CD4-positive, alpha-beta memory T cell (primary cell): ENCODE measurements at regions of chr9 and their contacts with region 1.

Region 1: GRCh38 chr9:131334629-131335367 is 45.3 kb downstream of the PLPP7 start:
- DNase-seq: no peak
- H3K4me3 ChIP-seq: no peak overlapping the region
- H3K4me3 Mint-ChIP-seq: no peak overlapping the region
- H3K27ac ChIP-seq: no peak overlapping the region
- H3K27ac Mint-ChIP-seq: no peak overlapping the region
- H3K4me1 ChIP-seq: peaks cover 4% of the 10 kb centered on the region
- H3K4me1 Mint-ChIP-seq: peaks cover 3 to 5% (median 4%) of the 10 kb centered on the region in 4 donors
- H3K27me3 ChIP-seq: no peaks in the 10 kb centered on the region
- H3K27me3 Mint-ChIP-seq: no peaks in the 10 kb centered on the region

Region 2: GRCh38 chr9:131178382-131178781 is 156.4 kb before region 1 on chr9:
- CTCF ChIA-PET with region 1: interaction called, 302 read pairs
- POLR2A ChIA-PET with region 1: interaction called, 18 read pairs
- intact Hi-C with region 1: loop called (anchors 1 kb)
- DNase-seq: peak; percentile 64 to 78 (median 71)
- H3K4me3 ChIP-seq: no peak overlapping the region
- H3K4me3 Mint-ChIP-seq: no peak overlapping the region
- H3K27ac ChIP-seq: no peak overlapping the region
- H3K27ac Mint-ChIP-seq: peak overlapping the region; percentile 11 to 90 (median 79)
- H3K4me1 ChIP-seq: no peaks in the 10 kb centered on the region
- H3K4me1 Mint-ChIP-seq: peaks cover 3 to 14% (median 12%) of the 10 kb centered on the region in 4 donors
- H3K27me3 ChIP-seq: no peaks in the 10 kb centered on the region
- H3K27me3 Mint-ChIP-seq: no peaks in the 10 kb centered on the region

Region 3: GRCh38 chr9:131237931-131238401 is 96.8 kb before region 1 on chr9:
- CTCF ChIA-PET with region 1: interaction called, 6 read pairs
- POLR2A ChIA-PET with region 1: no interaction called
- intact Hi-C with region 1: loop called (anchors 1 kb)
- DNase-seq: peak; percentile 84 to 89 (median 85)
- H3K4me3 ChIP-seq: peak overlapping the region in 1 of 2 donors; percentile 34
- H3K4me3 Mint-ChIP-seq: peak overlapping the region; percentile 77 to 87 (median 83)
- H3K27ac ChIP-seq: peak overlapping the region; percentile 42
- H3K27ac Mint-ChIP-seq: peak overlapping the region; percentile 84 to 98 (median 96)
- H3K4me1 ChIP-seq: peaks cover 65% of the 10 kb centered on the region
- H3K4me1 Mint-ChIP-seq: peaks cover 32 to 68% (median 49%) of the 10 kb centered on the region in 4 donors
- H3K27me3 ChIP-seq: no peaks in the 10 kb centered on the region
- H3K27me3 Mint-ChIP-seq: no peaks in the 10 kb centered on the region

Region 4: GRCh38 chr9:131270171-131271015 is 64.4 kb before region 1 on chr9:
- CTCF ChIA-PET with region 1: interaction called, 17 read pairs
- POLR2A ChIA-PET with region 1: no interaction called
- intact Hi-C with region 1: loop called (anchors 5 kb)
- DNase-seq: peak; percentile 49 to 76 (median 55)
- H3K4me3 ChIP-seq: peak overlapping the region; percentile 31 to 91
- H3K4me3 Mint-ChIP-seq: peak overlapping the region; percentile 96 to 100 (median 99)
- H3K27ac ChIP-seq: peak overlapping the region; percentile 72
- H3K27ac Mint-ChIP-seq: peak overlapping the region; percentile 93 to 99 (median 96)
- H3K4me1 ChIP-seq: peaks cover 63% of the 10 kb centered on the region
- H3K4me1 Mint-ChIP-seq: peaks cover 39 to 84% (median 52%) of the 10 kb centered on the region in 4 donors
- H3K27me3 ChIP-seq: no peaks in the 10 kb centered on the region
- H3K27me3 Mint-ChIP-seq: no peaks in the 10 kb centered on the region

Region 5: GRCh38 chr9:131292937-131293336 is 41.9 kb before region 1 on chr9:
- CTCF ChIA-PET with region 1: interaction called, 10 read pairs
- POLR2A ChIA-PET with region 1: interaction called, 3 read pairs
- intact Hi-C with region 1: no loop called
- DNase-seq: no peak
- H3K4me3 ChIP-seq: no peak overlapping the region
- H3K4me3 Mint-ChIP-seq: no peak overlapping the region
- H3K27ac ChIP-seq: no peak overlapping the region
- H3K27ac Mint-ChIP-seq: no peak overlapping the region
- H3K4me1 ChIP-seq: no peaks in the 10 kb centered on the region
- H3K4me1 Mint-ChIP-seq: peaks cover 0 to 3% (median 0%) of the 10 kb centered on the region in 4 donors
- H3K27me3 ChIP-seq: no peaks in the 10 kb centered on the region
- H3K27me3 Mint-ChIP-seq: no peaks in the 10 kb centered on the region

Region 6: DNA sequence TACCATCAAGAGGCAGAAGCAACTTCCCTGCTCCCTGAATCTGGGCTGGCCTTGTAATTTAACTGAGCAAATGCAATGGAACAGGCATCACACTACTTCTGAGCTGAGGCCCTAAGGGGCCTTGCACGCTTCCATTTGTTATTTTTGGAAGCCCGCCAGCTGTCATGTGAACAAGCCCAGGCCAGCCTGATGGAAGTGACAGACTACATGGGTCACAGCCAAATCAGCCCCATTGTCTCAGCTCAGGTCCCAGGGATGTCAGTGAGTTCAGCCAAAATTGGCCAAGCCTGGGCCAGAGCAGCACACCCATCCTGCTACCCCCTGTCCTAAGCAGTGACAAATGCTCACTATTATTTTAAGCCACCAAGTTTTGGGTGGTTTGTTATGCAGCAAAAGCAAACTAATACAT is 283.3 kb after region 1 on chr9:
- CTCF ChIA-PET with region 1: no interaction called
- POLR2A ChIA-PET with region 1: no interaction called
- intact Hi-C with region 1: no loop called
- DNase-seq: no peak
- H3K4me3 ChIP-seq: no peak overlapping the region
- H3K4me3 Mint-ChIP-seq: no peak overlapping the region
- H3K27ac ChIP-seq: no peak overlapping the region
- H3K27ac Mint-ChIP-seq: peak overlapping the region in 3 of 7 donors; percentile 15 to 79 (median 46)
- H3K4me1 ChIP-seq: no peaks in the 10 kb centered on the region
- H3K4me1 Mint-ChIP-seq: peaks cover 0 to 22% (median 10%) of the 10 kb centered on the region in 4 donors
- H3K27me3 ChIP-seq: no peaks in the 10 kb centered on the region
- H3K27me3 Mint-ChIP-seq: no peaks in the 10 kb centered on the region